ENCODE measurements at regions of chr11 and their contacts with region 1.

Region 1: DNA sequence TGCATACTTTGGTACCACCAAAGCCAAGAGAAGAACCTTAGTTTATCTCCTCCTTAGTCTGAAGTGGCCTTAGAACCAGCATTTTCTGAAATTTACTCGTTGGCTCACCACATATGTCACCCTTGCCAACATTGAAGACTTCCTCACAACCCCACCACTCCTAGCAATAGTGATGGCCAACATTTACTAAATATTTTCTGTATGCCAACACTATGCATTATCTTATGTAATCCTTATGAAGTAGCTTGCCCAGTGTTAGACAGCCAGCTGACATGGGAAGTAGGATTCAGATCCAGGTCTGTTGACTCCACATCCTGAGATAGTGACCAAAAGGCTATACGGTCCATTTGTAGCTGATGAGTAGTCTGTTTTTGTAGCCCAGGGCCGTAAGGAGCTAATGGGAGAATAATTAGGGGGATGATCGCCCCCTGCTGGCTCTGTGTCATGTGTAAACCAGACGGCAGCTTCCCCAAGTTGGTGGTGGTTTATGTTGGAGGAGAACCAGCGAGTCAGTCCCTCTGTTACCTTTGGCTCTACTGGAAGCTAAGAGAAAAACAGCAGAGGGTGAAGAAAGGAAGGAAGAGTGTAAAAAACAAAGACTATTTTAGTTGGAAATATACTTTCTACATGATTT is 120.5 kb upstream of the RASSF10 start:
- DNase-seq: peak; percentile 41 to 60
- H3K4me3 ChIP-seq: no peak overlapping the region
- H3K27ac ChIP-seq: no peak overlapping the region
- H3K4me1 ChIP-seq: no peaks in the 10 kb centered on the region; the same call in 1 of the 2 replicates
- H3K27me3 ChIP-seq: no peaks in the 10 kb centered on the region
- CTCF ChIP-seq: peak; percentile 76

Region 2: DNA sequence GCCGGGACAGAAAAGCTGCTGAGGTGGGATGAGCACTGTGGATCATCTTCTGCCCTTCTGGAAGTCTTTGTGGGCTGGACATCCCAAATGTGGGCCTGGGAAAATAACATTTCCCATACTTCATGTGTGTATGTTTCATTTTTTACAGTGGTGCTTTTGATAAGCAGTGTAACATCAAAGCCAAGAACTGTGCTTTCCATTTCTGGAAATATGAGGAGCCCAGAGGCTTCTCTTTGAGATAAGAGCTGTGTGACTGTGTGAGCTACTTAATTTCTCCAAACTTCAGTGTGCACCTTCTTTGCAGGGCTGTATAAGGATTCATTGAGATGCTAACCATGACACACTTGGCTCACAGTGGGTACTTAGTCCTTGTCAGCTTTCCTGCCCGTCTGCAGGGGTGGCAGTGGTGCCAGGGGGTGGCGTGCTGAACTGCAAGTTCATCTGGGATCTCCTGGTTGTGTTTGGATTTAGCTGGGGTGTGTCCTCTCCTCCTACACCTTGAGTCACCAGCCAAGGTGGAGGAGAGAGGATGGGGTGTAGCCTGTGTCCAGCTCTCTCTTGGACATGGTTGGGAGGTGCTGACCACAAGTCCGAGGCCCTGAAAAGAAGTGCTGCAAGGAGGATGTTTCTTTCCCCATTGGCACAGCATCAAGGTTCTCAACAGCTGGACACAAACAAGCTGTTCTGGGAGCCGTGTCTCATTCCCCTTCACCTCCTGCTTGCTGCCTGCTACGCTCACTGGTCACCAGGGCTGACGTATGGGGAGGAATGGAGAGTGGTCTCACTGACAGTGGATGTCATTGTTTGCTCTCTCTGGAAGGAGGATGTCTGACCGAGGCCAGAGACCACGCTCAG is 75.0 kb before region 1 on chr11:
- CTCF ChIA-PET with region 1: no interaction called
- POLR2A ChIA-PET with region 1: no interaction called
- intact Hi-C with region 1: loop called (anchors 5 kb)
- DNase-seq: peak; percentile 64 to 71
- H3K4me3 ChIP-seq: no peak overlapping the region
- H3K27ac ChIP-seq: 0 out of 2 replicates have a peak overlapping the region, but pooled peaks have one; percentile 16
- H3K4me1 ChIP-seq: peaks cover 42% of the 10 kb centered on the region
- H3K27me3 ChIP-seq: no peaks in the 10 kb centered on the region
- CTCF ChIP-seq: no peak

Measured in PC-9 (cell line).